ENCODE measurements at regions of chr3 and their contacts with region 1.

Region 1: DNA sequence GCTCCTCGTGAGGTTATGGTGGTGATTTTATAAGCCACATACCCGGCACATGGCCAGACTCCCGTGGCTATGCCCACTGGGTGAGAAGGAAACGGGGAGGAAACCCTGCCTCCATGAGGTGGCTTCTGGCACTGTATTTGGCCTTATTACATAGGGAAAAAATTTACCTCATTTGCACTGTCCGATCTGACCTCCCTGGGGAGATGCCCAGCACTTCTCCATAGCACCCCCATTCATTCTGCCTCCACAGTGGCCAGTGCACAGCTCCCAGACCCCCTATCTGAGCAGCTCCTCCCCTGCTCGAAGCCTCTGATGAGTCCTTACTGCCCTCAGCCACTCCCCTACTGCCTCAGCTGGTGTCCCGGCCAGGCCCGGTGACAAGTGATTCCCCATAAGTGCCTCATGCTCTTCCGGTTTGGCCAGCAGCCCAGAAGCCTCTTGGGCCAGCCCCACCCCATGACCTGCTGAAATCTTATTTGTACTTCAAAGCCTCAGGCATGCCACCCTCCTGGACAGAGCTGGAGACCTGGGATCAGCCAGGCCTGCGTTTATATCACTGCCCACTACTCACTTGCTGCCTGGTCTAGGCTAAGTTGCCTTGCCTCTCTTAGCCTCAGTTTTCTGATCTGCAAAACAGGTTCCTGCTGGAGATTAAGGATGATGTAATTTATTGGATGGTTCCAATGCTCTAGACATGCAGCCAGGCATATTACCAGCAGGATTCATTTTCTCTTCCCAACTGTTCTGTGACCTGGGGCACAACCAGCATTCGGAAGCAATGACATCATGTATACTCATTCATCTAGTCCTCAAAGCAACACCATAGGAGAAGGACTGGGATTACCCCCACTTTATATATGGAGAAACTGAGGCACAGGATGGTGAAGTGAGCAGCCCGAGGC is 30.6 kb upstream of the SLC6A6 start:
- DNase-seq: peak; percentile 91 to 96
- ATAC-seq: peak; percentile 71 to 75
- H3K4me3 ChIP-seq: no peak overlapping the region
- H3K27ac ChIP-seq: peak overlapping the region; percentile 84 to 91 (median 85)
- H3K4me1 ChIP-seq: peaks cover 56 to 64% of the 10 kb centered on the region in 2 donors
- H3K27me3 ChIP-seq: no peaks in the 10 kb centered on the region
- CTCF ChIP-seq: peak in 1 of 5 experiments; percentile 23
- POLR2A ChIP-seq: peak; percentile 67 to 73

Region 2: GRCh38 chr3:14248849-14249523 is 122.8 kb before region 1 on chr3:
- in situ Hi-C with region 1: no loop called
- intact Hi-C with region 1: no loop called
- DNase-seq: peak; percentile 33 to 76
- ATAC-seq: peak; percentile 77 to 84
- H3K4me3 ChIP-seq: no peak overlapping the region
- H3K27ac ChIP-seq: peak overlapping the region; percentile 14 to 60 (median 30)
- H3K4me1 ChIP-seq: no peaks in the 10 kb centered on the region
- H3K27me3 ChIP-seq: no peaks in the 10 kb centered on the region
- CTCF ChIP-seq: no peak
- POLR2A ChIP-seq: no peak

Region 3: GRCh38 chr3:14261229-14261628 is 110.6 kb before region 1 on chr3:
- in situ Hi-C with region 1: loop called in 1 of 4 experiments (anchors 10 kb)
- intact Hi-C with region 1: loop called (anchors 5 kb)
- DNase-seq: peak; percentile 73 to 85
- ATAC-seq: peak; percentile 86 to 89
- H3K4me3 ChIP-seq: no peak overlapping the region
- H3K27ac ChIP-seq: no peak overlapping the region
- H3K4me1 ChIP-seq: peaks cover 2 to 9% of the 10 kb centered on the region in 2 donors
- H3K27me3 ChIP-seq: no peaks in the 10 kb centered on the region
- CTCF ChIP-seq: peak; percentile 94 to 99 (median 97)
- POLR2A ChIP-seq: no peak

Region 4: DNA sequence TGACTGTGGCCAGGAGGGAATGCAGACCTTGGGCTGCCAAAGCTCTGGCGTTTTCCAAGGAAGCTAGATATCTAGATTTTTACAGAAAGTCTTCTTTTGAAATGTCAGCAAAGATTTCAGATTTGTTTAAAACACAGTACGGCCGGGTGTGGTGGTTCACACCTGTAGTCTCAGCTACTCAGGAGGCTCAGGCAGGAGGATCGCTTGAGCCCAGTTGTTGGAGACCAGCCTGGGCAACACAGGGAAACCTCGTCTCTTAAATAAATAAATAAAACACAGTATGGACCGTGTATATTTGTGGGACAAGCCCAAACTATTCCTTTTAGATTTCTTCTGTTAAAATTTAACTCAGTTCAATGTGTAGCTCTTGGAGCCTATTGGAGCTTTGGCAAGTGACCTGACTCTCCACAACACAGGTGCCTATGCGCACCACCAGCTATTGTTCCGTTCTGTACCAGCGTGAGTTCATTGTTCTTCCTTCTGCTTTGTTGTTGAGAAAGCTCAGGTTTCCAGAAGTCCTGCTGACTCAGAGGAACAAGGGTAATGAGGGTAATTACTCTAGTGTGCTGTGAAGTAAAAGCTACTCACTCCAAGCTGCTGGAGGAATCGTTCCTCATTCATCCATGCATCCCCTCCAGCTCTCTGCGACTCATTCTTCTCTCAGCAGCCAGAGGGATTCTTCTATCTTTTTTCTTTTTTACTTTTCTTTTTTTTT is 42.6 kb before region 1 on chr3:
- in situ Hi-C with region 1: no loop called
- intact Hi-C with region 1: loop called (anchors 2 kb)
- DNase-seq: no peak
- ATAC-seq: peak in 1 of 2 donors; percentile 46
- H3K4me3 ChIP-seq: no peak overlapping the region
- H3K27ac ChIP-seq: peak overlapping the region; percentile 44 to 95 (median 79)
- H3K4me1 ChIP-seq: peaks cover 19 to 36% of the 10 kb centered on the region in 2 donors
- H3K27me3 ChIP-seq: no peaks in the 10 kb centered on the region
- CTCF ChIP-seq: no peak
- POLR2A ChIP-seq: no peak

Region 5: DNA sequence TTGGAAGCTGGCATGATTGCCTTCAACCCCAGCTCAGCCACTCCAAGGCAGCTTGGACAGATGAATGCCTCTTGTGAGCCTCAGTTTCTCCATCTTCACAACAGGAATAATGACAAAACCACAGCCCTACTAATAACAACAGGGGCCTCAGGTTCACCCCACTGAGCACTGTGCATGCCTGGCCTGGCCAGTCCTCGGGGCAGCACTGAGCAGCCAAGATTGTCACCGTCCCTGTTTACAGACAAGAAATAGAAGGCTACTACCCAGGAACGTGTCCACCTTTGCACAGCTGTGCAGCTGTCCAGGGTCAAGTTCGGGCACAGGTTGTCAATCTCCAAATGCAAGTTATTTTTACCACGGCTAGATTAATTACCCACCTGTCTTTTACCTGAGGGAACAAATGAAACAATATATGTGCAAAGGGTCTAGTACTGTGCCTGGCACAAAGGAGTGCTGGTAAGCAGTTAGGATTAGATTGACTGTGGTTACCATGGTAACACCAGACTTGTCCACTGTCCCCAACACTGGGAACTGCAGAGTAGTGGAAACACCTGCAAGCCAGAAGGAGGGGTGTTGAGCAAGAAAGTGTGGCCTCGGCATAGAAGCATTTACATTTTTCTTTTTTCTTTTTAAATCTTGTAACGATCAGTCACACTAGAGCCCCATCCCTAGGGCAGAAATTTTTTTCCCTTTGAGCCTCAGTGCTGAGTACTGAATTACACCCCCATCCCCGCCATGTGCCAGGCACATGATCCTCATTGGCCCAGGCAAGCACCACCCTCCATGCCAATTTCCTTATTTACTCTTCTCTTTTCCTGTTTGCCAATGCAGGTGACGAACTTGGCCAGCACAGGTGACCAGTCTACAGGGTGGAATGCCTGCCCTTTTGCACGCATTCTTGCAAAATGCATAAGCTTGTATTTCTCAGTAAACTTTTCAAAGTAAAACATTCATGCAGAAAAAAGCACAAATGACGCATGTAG is 35.8 kb before region 1 on chr3:
- in situ Hi-C with region 1: no loop called
- intact Hi-C with region 1: loop called (anchors 1 kb)
- DNase-seq: peak; percentile 74 to 82
- ATAC-seq: peak; percentile 84 to 85
- H3K4me3 ChIP-seq: no peak overlapping the region
- H3K27ac ChIP-seq: peak overlapping the region; percentile 29 to 79 (median 64)
- H3K4me1 ChIP-seq: peaks cover 14 to 17% of the 10 kb centered on the region in 2 donors
- H3K27me3 ChIP-seq: no peaks in the 10 kb centered on the region
- CTCF ChIP-seq: peak in 2 of 5 experiments; percentile 32 to 34
- POLR2A ChIP-seq: no peak